WTC11 (cell line): ENCODE measurements at regions of chr22 and their contacts with region 1.

Region 1: GRCh38 chr22:37781479-37781911 is 26.2 kb upstream of the GCAT start:
- DNase-seq: peak; percentile 38
- ATAC-seq: peak; percentile 71
- H3K4me3 Mint-ChIP-seq: no peak overlapping the region
- H3K27ac Mint-ChIP-seq: no peak overlapping the region
- H3K4me1 Mint-ChIP-seq: peaks cover 12% of the 10 kb centered on the region; the same call in 1 of the 2 replicates
- H3K27me3 Mint-ChIP-seq: peaks cover 59% of the 10 kb centered on the region
- CTCF ChIP-seq: no peak

Region 2: GRCh38 chr22:37746366-37747079 is 35.0 kb before region 1 on chr22:
- CTCF ChIA-PET with region 1: interaction called, 24 read pairs
- POLR2A ChIA-PET with region 1: interaction called, 4 read pairs
- DNase-seq: peak; percentile 45
- ATAC-seq: peak; percentile 33
- H3K4me3 Mint-ChIP-seq: peak overlapping the region; percentile 78
- H3K27ac Mint-ChIP-seq: no peak overlapping the region
- H3K4me1 Mint-ChIP-seq: peaks cover 18% of the 10 kb centered on the region
- H3K27me3 Mint-ChIP-seq: peaks cover 43% of the 10 kb centered on the region
- CTCF ChIP-seq: no peak

Region 3: DNA sequence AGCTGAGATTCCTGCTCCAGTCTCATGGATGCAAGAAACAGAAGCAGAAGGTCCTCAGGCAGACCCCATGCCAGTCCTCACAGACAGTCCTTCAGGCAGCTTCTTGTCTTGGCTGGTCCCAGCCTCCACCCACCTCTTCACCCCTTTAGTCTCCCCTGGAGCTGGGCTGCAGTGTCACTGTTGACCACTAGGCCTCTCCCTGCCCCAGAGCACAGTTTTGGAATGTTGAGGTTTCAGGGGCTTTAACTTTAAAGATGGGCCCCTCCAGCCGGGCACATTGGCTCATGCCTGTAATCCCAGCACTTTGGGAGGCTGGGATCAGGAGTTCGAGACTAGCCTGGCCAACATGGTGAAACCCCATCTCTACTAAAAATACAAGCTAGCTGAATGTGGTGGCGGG is 13.2 kb before region 1 on chr22:
- CTCF ChIA-PET with region 1: interaction called, 25 read pairs
- POLR2A ChIA-PET with region 1: no interaction called
- DNase-seq: peak; percentile 54
- ATAC-seq: peak; percentile 82
- H3K4me3 Mint-ChIP-seq: no peak overlapping the region
- H3K27ac Mint-ChIP-seq: no peak overlapping the region
- H3K4me1 Mint-ChIP-seq: no peaks in the 10 kb centered on the region
- H3K27me3 Mint-ChIP-seq: peaks cover 4% of the 10 kb centered on the region; the same call in 1 of the 2 replicates
- CTCF ChIP-seq: peak; percentile 47

Region 4: GRCh38 chr22:37792494-37792893 is 11.0 kb after region 1 on chr22:
- CTCF ChIA-PET with region 1: interaction called, 11 read pairs
- POLR2A ChIA-PET with region 1: no interaction called
- DNase-seq: no peak
- ATAC-seq: no peak
- H3K4me3 Mint-ChIP-seq: no peak overlapping the region
- H3K27ac Mint-ChIP-seq: no peak overlapping the region
- H3K4me1 Mint-ChIP-seq: no peaks in the 10 kb centered on the region
- H3K27me3 Mint-ChIP-seq: peaks cover 53% of the 10 kb centered on the region
- CTCF ChIP-seq: no peak

Region 5: DNA sequence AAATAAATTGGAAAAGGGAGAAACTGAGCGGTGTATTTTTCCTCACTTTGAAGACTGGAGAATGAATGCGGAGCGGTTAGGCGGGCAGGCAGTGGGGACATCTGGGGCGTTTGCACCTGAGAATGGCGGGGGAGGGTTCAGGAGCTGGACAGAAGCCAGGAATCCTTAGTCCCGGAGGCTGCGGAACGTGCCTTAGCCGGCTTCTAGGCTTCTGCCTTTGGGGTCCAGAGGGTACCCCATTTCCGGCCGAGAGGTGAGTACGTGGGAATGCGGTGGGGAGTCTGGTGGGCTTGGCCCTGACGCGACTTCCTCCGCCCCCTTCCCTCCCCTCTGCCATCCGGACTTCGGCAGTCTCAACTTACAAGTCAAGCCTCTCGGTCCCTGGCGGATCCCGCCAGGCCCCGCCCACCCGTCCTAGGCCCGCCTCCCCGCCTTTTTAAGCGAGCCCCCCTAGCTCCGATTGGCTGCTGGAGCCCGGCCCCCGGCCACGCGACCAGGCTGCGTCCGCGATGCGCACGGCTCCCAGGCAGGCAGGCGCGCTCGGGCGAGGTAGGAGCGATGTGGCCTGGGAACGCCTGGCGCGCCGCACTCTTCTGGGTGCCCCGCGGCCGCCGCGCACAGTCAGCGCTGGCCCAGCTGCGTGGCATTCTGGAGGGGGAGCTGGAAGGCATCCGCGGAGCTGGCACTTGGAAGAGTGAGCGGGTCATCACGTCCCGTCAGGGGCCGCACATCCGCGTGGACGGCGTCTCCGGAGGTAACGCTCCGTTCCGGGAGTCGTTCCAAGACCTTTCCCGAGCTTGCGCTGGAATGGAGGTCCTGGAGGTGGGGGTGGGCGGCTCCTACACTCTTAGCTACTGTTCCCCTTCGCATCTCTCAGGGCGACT is 26.2 kb after region 1 on chr22 and contains the start of gene GCAT:
- CTCF ChIA-PET with region 1: interaction called, 11 read pairs
- POLR2A ChIA-PET with region 1: interaction called, 3 read pairs
- DNase-seq: peak; percentile 98
- ATAC-seq: peak; percentile 87
- H3K4me3 Mint-ChIP-seq: peak within 1 kb of the TSS; percentile 84
- H3K27ac Mint-ChIP-seq: no peak within 1 kb of the TSS
- H3K4me1 Mint-ChIP-seq: peaks cover 41% of the 10 kb centered on the region
- H3K27me3 Mint-ChIP-seq: peaks cover 59% of the 10 kb centered on the region
- CTCF ChIP-seq: no peak
- total RNA-seq, gene GCAT: 33.0 to 36.4 TPM (median 36.3 TPM) in 3 replicates

Region 6: DNA sequence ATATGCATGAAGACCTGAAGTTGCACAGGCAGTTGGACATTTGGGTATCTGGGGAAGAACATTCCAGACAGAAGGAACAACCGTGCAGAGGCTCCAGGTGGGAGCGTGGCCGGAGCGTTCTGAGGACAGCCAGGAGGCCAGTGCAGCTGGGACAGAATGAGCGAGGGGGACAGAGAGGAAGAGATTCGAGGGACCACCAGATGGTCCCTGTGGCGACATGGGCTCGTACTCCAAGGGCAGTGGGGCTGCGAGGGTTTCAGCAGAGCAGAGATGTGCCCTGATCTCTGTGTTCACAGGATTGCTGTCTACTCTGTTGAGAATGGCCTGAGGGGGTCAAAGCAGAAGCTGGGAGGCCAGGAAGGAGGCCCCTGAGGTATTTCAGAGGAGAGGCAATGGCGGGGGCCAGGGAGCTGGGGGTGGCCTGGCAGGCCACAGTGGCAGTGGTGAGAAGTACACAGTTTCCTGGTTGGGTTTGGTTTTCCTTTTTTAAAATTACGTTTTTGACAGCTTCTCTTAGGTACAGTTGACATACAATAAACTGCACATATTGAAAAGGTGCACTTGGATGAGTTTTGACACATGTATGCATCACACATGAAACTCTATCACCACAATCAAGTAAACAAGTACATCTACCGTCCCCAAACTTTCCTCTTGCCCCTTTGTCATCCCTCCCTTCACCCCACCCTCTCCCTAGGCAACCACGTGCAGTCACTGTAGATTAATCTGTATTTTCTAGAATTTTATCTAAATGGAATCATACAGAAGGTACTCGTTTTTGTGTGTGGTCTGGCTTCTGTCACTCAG is 227.7 kb after region 1 on chr22:
- CTCF ChIA-PET with region 1: no interaction called
- POLR2A ChIA-PET with region 1: no interaction called
- DNase-seq: no peak
- ATAC-seq: no peak
- H3K4me3 Mint-ChIP-seq: no peak overlapping the region
- H3K27ac Mint-ChIP-seq: no peak overlapping the region; the same call in 1 of the 2 replicates
- H3K4me1 Mint-ChIP-seq: no peaks in the 10 kb centered on the region
- H3K27me3 Mint-ChIP-seq: peaks cover 8% of the 10 kb centered on the region
- CTCF ChIP-seq: no peak